ENCODE measurements at regions of chr12 and their contacts with region 1.

Region 1: DNA sequence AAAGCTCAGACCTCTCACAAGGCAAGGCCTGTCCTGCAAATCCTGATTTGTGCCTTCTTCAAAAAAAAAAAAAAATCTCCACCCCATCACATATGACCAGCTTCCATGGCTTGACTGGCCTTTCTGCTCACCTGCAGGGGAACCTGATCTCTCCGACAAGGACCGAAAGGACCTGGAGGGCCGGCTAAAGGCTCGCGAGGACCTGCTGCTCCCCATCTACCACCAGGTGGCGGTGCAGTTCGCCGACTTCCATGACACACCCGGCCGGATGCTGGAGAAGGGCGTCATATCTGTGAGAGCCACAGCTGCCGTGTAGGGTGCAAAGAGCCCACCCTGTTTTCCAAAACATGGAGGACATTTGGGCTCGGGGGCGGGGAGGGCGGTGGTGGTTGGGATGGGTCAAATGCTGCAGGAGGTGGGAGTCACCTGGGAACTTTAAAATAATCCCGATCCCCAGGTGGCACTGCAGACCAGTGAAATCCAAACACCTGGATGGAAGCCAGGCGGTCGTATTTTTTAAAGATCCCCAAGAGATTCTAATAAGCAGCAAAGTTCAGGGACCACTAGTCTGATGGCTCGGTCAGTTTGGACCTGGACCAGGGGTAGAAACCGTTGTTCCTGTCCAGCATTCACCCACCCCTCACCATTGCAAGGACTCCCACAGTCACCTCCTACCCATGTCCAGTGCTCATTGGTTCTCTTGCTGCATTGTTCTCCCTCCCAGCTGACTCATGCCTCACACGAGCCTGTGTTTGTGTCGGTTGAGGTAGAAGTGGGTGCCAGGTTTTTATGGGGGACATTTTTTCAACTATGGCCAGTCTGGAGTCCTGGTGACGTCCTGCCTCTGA is 44.8 kb downstream of the FOXN4 start:
- DNase-seq: peak in 1 of 2 donors; percentile 70
- H3K4me3 ChIP-seq: no peak overlapping the region
- H3K27ac ChIP-seq: no peak overlapping the region
- H3K4me1 ChIP-seq: no peaks in the 10 kb centered on the region
- H3K27me3 ChIP-seq: no peaks in the 10 kb centered on the region
- CTCF ChIP-seq: peak in 2 of 3 experiments; percentile 53

Region 2: GRCh38 chr12:109385339-109386067 is 121.2 kb after region 1 on chr12:
- intact Hi-C with region 1: loop called (anchors 2 kb)
- DNase-seq: no peak
- H3K4me3 ChIP-seq: no peak overlapping the region
- H3K27ac ChIP-seq: no peak overlapping the region
- H3K4me1 ChIP-seq: no peaks in the 10 kb centered on the region
- H3K27me3 ChIP-seq: no peaks in the 10 kb centered on the region
- CTCF ChIP-seq: peak; percentile 9 to 27 (median 24)